ENCODE measurements at regions of chr1 and their contacts with region 1.

Region 1: GRCh38 chr1:68120136-68120791 is 69.8 kb upstream of the DIRAS3 start:
- DNase-seq: peak; percentile 41
- H3K4me3 ChIP-seq: no peak overlapping the region
- H3K27ac ChIP-seq: peak overlapping the region; percentile 43 to 67 (median 49)
- H3K4me1 ChIP-seq: peaks cover 0 to 4% (median 0%) of the 10 kb centered on the region in 4 donors
- H3K27me3 ChIP-seq: no peaks in the 10 kb centered on the region
- CTCF ChIP-seq: peak; percentile 78 to 89 (median 80)
- EP300 ChIP-seq: no peak
- POLR2A ChIP-seq: no peak

Region 2: GRCh38 chr1:67535474-67535873 is 584.8 kb before region 1 on chr1:
- in situ Hi-C with region 1: loop called in 1 of 4 experiments (anchors 25 kb)
- intact Hi-C with region 1: no loop called
- DNase-seq: peak; percentile 89
- H3K4me3 ChIP-seq: no peak overlapping the region
- H3K27ac ChIP-seq: no peak overlapping the region
- H3K4me1 ChIP-seq: peaks cover 2 to 30% (median 7%) of the 10 kb centered on the region in 4 donors
- H3K27me3 ChIP-seq: no peaks in the 10 kb centered on the region
- CTCF ChIP-seq: peak; percentile 86 to 97 (median 93)
- EP300 ChIP-seq: no peak
- POLR2A ChIP-seq: no peak

Region 3: DNA sequence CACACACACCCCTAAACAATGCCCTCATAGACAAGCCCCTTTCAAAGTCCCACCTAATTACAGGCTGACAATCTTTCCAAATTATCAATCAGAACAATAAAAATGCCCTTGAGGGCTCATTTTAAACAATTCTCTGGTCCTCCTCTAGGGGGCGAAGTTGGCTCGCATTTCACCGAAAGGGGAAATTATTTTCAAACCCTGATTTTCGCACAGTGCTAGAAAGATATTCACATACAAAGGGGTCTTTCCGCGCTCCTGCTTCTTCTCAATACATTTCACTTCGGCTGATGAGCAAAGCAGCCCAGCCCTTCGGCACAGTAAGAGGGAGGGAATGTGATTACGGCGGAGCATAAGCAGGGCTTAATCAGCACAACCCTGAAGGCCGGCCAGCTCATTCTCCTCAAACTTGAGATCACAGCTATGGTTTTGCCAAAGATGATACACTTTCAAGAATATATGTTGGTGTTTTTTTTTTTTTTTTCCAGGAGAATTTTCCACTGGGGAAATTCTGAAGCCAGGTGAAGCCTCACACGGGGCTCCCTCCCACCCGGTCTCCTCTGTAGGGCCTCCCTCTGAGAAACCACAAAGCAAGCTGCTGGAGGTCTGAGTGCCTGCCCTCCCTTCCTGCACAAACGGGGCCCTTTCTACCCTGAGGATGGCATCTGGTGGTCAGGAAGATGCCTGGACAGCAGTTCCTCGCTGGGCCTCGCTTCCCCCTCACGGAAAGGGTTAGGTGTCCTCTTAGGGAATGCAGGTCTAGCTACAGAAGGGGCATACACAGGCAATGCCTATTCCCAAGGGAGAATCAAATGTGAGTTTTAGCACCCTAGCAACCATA is 353.9 kb before region 1 on chr1:
- in situ Hi-C with region 1: loop called in 3 of 4 experiments (anchors 10 kb)
- intact Hi-C with region 1: loop called (anchors 5 kb)
- DNase-seq: no peak
- H3K4me3 ChIP-seq: no peak overlapping the region
- H3K27ac ChIP-seq: peak overlapping the region; percentile 12 to 41 (median 29)
- H3K4me1 ChIP-seq: peaks cover 2 to 38% (median 7%) of the 10 kb centered on the region in 4 donors
- H3K27me3 ChIP-seq: no peaks in the 10 kb centered on the region
- CTCF ChIP-seq: peak; percentile 68 to 89 (median 81)
- EP300 ChIP-seq: no peak
- POLR2A ChIP-seq: no peak

Region 4: GRCh38 chr1:67853704-67854103 is 266.6 kb before region 1 on chr1:
- in situ Hi-C with region 1: loop called in 1 of 4 experiments (anchors 10 kb)
- intact Hi-C with region 1: loop called (anchors 10 kb)
- DNase-seq: peak; percentile 52
- H3K4me3 ChIP-seq: no peak overlapping the region
- H3K27ac ChIP-seq: no peak overlapping the region
- H3K4me1 ChIP-seq: peaks cover 5 to 12% (median 8%) of the 10 kb centered on the region in 4 donors
- H3K27me3 ChIP-seq: no peaks in the 10 kb centered on the region
- CTCF ChIP-seq: peak; percentile 48 to 75 (median 61)
- EP300 ChIP-seq: no peak
- POLR2A ChIP-seq: no peak

Region 5: GRCh38 chr1:68321084-68321685 is 200.9 kb after region 1 on chr1:
- in situ Hi-C with region 1: loop called in 2 of 4 experiments (anchors 10 kb)
- intact Hi-C with region 1: loop called (anchors 2 kb)
- DNase-seq: peak; percentile 76
- H3K4me3 ChIP-seq: no peak overlapping the region
- H3K27ac ChIP-seq: peak overlapping the region in 3 of 4 donors; percentile 47 to 67 (median 64)
- H3K4me1 ChIP-seq: peaks cover 0 to 7% (median 2%) of the 10 kb centered on the region in 4 donors
- H3K27me3 ChIP-seq: no peaks in the 10 kb centered on the region
- CTCF ChIP-seq: peak; percentile 70 to 85 (median 77)
- EP300 ChIP-seq: no peak
- POLR2A ChIP-seq: no peak

Region 6: DNA sequence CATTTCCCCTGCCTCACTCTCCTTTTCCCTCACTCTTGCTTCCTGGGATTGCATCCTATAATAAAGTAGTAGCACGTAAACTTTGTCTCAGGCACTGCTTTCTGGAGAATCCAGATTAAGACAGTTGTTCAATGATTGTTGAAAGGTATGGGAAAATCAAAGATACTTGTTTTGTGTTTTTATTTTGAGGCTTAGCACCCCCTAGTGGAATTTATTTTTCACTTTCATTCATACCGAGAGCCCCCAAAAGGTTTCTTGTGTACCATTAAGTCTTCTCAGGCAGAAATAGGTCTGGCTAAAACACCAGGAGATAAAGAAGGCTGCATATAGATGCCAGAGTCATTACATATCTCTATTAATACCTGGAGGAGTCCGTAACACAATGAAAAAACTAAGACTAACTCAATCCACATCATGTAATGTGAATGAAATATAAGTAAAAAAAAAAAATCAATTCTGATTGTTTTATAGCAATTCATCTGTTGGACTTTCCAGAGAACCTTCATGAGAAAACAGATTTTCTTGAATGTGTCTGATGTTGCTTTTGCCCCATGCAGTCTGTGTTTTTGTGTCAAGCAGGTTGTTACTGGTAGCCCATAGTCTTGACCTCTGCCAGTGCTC is 226.0 kb after region 1 on chr1:
- in situ Hi-C with region 1: loop called in 1 of 4 experiments (anchors 5 kb)
- intact Hi-C with region 1: loop called (anchors 2 kb)
- DNase-seq: no peak
- H3K4me3 ChIP-seq: no peak overlapping the region
- H3K27ac ChIP-seq: no peak overlapping the region
- H3K4me1 ChIP-seq: no peaks in the 10 kb centered on the region
- H3K27me3 ChIP-seq: no peaks in the 10 kb centered on the region
- CTCF ChIP-seq: peak; percentile 27 to 50 (median 42)
- EP300 ChIP-seq: no peak
- POLR2A ChIP-seq: no peak

Region 7: DNA sequence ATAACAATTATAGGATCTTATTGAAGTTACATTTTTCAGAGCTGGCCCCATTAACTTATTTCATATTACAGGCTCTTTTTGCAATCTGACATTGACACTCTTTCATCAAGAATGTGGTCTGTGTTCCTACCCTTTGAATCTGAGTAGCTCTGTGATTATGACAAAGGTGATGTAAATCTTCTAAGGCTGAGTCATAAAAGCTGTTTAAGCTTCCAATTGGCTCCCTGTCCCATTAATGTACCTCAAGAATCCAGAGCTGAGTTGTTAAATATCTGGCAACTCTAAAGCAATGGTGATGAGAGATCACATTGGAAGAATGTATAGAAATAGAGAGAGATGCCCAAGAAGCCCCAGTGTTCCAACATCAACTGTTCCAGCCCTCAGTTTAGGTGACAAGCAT is 555.1 kb after region 1 on chr1:
- in situ Hi-C with region 1: no loop called
- intact Hi-C with region 1: no loop called
- DNase-seq: no peak
- H3K4me3 ChIP-seq: no peak overlapping the region
- H3K27ac ChIP-seq: no peak overlapping the region
- H3K4me1 ChIP-seq: no peaks in the 10 kb centered on the region
- H3K27me3 ChIP-seq: no peaks in the 10 kb centered on the region
- CTCF ChIP-seq: no peak
- EP300 ChIP-seq: no peak
- POLR2A ChIP-seq: no peak